Activated T-helper 1 cell treated with anti-CD3 and anti-CD28 coated beads, Interleukin-12 subunit alpha, Interleukin-12 subunit beta, Interleukin-2, Interleukin-4 antibody, amounts not matched to agents 30 ng/mL and 10 ng/mL and 1 ng/mL, durations not matched to agents 14 hours and 24 hours and 36 hours (primary cell): ENCODE measurements at regions of chr20 and their contacts with region 1.

Region 1: GRCh38 chr20:49219089-49219923 is at the start of gene DDX27:
- DNase-seq: peak; percentile 95
- H3K4me3 Mint-ChIP-seq: peak within 1 kb of the TSS; percentile 97
- H3K27ac Mint-ChIP-seq: peak within 1 kb of the TSS; percentile 98
- H3K4me1 Mint-ChIP-seq: peaks cover 26% of the 10 kb centered on the region
- H3K27me3 Mint-ChIP-seq: no peaks in the 10 kb centered on the region
- total RNA-seq, gene DDX27: 53.1 and 57.4 TPM in 2 replicates

Region 2: DNA sequence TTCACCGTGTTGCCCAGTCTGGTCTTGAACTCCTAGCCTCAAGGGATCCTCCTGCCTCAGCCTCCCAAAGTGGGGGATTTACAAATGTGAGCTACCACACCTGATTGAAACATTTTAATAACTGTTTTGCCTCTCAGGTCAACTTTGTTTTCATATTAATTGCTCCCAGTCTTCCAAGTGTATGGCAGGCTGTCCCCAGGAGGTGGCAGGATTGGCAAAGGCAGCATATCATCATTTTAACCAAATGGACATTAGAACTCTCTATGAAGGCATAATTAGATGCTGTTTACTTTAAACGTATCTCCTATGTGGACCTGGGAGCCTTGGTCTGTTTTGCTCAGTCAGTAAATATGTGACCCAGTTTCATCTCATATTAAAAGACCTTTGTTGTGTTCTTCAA is 232.4 kb before region 1 on chr20:
- intact Hi-C with region 1: loop called (anchors 1 kb)
- DNase-seq: no peak
- H3K4me3 Mint-ChIP-seq: no peak overlapping the region
- H3K27ac Mint-ChIP-seq: no peak overlapping the region
- H3K4me1 Mint-ChIP-seq: no peaks in the 10 kb centered on the region
- H3K27me3 Mint-ChIP-seq: no peaks in the 10 kb centered on the region

Region 3: DNA sequence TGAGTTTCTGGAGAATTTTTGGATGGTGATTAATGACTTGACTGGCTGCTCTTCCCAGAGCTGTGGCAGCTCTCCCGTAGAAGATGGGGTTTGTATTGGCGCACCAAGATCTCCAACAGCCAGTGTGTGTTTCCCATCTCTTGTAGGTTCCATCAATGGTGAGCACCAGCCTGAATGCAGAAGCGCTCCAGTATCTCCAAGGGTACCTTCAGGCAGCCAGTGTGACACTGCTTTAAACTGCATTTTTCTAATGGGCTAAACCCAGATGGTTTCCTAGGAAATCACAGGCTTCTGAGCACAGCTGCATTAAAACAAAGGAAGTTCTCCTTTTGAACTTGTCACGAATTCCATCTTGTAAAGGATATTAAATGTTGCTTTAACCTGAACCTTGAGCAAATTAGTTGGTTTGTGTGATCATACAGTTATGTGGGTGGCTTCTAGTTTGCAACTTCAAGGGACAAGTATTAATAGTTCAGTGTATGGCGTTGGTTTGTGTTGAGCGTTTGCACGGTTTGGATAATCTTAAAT is 123.0 kb before region 1 on chr20:
- intact Hi-C with region 1: no loop called
- DNase-seq: no peak
- H3K4me3 Mint-ChIP-seq: no peak overlapping the region
- H3K27ac Mint-ChIP-seq: no peak overlapping the region
- H3K4me1 Mint-ChIP-seq: peaks cover 13% of the 10 kb centered on the region
- H3K27me3 Mint-ChIP-seq: no peaks in the 10 kb centered on the region

Region 4: GRCh38 chr20:49132995-49133478 is 86.3 kb before region 1 on chr20:
- intact Hi-C with region 1: loop called (anchors 1 kb)
- DNase-seq: no peak
- H3K4me3 Mint-ChIP-seq: no peak overlapping the region
- H3K27ac Mint-ChIP-seq: no peak overlapping the region
- H3K4me1 Mint-ChIP-seq: peaks cover 15% of the 10 kb centered on the region
- H3K27me3 Mint-ChIP-seq: no peaks in the 10 kb centered on the region

Region 5: GRCh38 chr20:49186535-49187329 is 32.6 kb before region 1 on chr20:
- intact Hi-C with region 1: loop called (anchors 1 kb)
- DNase-seq: peak; percentile 66
- H3K4me3 Mint-ChIP-seq: peak overlapping the region; percentile 89
- H3K27ac Mint-ChIP-seq: peak overlapping the region; percentile 81
- H3K4me1 Mint-ChIP-seq: peaks cover 50% of the 10 kb centered on the region
- H3K27me3 Mint-ChIP-seq: peaks cover 4% of the 10 kb centered on the region